GM10248 (cell line): ENCODE measurements at regions of chr6 and their contacts with region 1.

Region 1: DNA sequence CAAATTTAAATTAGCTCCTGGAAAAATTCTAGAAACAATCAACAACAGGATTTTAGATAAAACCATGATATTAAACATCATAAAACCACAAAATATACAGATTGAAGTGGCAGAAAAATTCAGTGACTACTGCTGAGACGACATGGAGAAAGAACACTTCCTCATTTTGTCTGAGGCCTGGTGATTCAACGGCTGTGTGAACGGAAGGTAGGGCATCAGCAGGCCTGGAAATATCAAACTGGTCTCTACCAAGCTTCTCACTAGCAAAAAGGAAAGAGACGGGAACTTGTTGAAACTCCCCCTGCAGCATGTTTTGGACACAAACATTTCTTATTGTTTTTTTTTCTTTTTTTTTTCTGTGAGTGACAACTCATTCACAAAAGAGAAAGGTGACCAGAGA is 58.0 kb upstream of the AHI1 start:
- DNase-seq: peak; percentile 20
- CTCF ChIP-seq: no peak

Region 2: DNA sequence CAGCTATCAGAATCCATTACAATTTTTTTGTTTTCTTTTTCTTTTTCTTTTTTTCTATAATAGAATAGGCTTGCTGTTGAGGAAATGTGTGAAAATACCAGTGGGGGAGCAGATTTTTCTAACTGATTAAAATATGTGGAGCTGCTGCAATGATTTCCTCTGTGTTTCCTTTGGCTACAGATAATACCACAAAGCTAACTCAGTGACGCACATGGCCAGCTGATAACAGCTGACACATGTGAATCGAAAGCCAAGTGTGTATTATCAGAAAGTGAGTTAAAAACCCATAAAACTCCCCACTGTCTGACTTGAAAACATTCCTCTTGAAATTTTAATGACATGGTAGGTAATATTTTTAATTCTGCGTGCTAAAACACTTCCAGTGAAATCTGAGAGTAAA is 12.8 kb after region 1 on chr6:
- CTCF ChIA-PET with region 1: interaction called, 11 read pairs
- POLR2A ChIA-PET with region 1: interaction called, 3 read pairs
- DNase-seq: peak; percentile 15
- CTCF ChIP-seq: no peak